Activated T-helper 1 cell treated with anti-CD3 and anti-CD28 coated beads, Interleukin-12 subunit alpha, Interleukin-12 subunit beta, Interleukin-2, Interleukin-4 antibody, amounts not matched to agents 30 ng/mL and 10 ng/mL and 1 ng/mL, durations not matched to agents 14 hours and 24 hours and 36 hours (primary cell): ENCODE measurements at regions of chr3 and their contacts with region 1.

Region 1: DNA sequence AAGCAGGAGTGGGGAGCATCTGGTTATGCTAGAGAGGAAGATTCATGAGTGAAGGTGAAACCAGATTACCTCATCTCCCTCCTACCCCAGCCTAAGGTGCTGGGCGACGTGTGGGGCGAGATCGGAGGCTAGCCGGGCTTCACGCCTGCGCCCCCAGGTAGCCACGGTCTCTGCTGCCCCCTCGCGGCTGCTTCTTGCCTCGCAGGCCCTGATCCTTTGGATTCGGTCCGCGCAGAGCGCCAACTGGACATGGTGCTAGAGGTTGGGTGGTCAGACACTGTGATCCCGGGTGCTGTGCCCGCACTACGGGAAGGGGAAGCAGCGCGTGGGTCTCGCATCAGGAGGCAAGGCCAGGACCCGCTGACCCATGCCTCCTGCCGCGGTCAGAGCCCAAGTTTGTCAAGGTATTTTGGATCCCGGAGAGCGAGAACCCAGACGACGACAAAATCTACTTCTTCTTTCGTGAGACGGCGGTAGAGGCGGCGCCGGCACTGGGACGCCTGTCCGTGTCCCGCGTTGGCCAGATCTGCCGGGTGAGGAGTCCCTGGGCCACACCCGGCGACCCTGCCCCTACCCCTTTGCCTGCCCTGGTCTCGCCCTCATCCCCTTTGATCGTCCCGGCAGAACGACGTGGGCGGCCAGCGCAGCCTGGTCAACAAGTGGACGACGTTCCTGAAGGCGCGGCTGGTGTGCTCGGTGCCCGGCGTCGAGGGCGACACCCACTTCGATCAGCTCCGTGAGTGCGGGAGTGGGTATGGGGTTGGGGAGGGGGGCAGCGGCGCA is 4.2 kb downstream of the SEMA3B start:
- DNase-seq: peak; percentile 82
- H3K4me3 Mint-ChIP-seq: peak overlapping the region; percentile 71
- H3K27ac Mint-ChIP-seq: no peak overlapping the region
- H3K4me1 Mint-ChIP-seq: peaks cover 21% of the 10 kb centered on the region
- H3K27me3 Mint-ChIP-seq: peaks cover 39% of the 10 kb centered on the region

Region 2: DNA sequence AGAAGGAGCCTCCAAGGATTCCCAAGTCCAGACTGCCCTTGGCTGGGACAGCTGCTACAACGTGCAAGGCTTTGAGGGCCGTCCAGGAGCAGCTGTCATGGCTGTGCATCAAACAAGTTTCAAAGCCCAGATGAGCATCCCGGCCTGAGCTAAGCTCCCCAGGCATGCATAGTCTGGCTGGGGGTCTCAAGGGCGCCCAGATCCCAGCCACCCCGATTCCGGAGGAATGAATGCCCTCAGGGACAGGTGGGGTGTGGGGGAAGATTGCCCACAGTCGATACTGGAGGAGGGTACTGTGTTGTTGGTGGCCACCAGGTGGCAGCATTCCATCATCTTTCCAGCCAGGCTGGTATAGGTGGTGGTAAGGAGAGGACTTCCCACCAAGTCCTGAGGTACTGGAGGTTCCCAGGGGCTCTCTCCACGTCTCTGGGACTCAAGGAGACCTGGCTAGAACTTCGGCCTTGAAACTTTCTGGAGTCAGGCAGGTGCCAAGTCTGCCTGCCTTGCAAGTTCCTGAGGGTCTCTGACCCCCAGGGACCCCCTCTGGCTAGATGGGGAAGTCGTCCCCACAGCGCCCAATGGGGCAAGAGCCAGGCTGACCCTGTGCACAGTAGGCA is 151.6 kb before region 1 on chr3:
- intact Hi-C with region 1: loop called (anchors 1 kb)
- DNase-seq: peak; percentile 36
- H3K4me3 Mint-ChIP-seq: no peak overlapping the region
- H3K27ac Mint-ChIP-seq: no peak overlapping the region
- H3K4me1 Mint-ChIP-seq: no peaks in the 10 kb centered on the region
- H3K27me3 Mint-ChIP-seq: no peaks in the 10 kb centered on the region

Region 3: GRCh38 chr3:50227390-50228183 is 45.5 kb before region 1 on chr3:
- intact Hi-C with region 1: loop called (anchors 1 kb)
- DNase-seq: peak; percentile 91
- H3K4me3 Mint-ChIP-seq: peak overlapping the region; percentile 90
- H3K27ac Mint-ChIP-seq: peak overlapping the region; percentile 90
- H3K4me1 Mint-ChIP-seq: peaks cover 34% of the 10 kb centered on the region
- H3K27me3 Mint-ChIP-seq: peaks cover 13% of the 10 kb centered on the region

Region 4: DNA sequence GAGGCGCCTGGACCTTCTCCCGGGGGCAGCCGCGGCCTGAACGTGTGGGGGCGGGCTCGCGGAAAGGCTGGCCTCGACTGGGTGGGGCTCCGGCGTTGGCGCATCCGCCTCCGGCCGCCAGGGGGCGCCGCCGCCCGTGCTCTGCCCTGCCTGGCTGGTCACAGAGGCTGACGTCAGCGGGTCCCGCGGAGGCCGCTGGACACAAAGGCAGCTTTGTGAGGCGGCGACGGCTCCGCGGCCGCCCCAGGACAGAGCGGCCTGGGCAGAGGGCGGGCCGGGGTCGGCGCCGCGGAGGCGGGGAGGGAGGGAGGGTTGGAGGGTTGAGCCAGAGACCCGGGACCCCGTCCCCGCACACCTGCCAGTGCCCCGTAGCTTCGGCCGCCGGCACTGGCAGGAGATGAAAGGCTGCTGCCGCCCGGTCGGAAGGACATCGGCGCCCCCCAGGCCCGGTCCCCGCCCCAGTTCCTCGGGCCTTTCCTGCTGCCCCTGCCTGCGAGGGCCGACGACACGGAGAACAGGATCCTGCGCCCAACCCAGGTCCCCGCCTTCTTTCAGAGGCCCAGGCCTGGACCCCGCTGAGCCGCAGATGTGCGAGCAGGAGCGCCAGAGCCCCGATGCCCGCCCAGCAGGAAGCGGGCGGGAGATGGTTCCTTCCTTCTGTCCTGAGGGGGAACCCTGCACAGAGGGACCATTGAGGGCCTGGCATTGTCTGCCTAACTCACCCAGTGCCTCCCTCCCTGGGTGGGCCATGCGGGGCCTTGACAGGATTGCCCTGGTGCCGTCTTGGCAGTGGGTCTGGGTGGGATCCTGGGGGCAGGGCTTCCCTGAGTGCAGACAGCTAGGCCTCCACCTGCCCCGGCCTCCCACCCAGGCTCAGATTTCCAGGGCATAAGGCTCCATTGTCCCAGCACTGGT is 12.8 kb before region 1 on chr3:
- intact Hi-C with region 1: loop called (anchors 1 kb)
- DNase-seq: peak; percentile 86
- H3K4me3 Mint-ChIP-seq: peak overlapping the region; percentile 68
- H3K27ac Mint-ChIP-seq: peak overlapping the region; percentile 68
- H3K4me1 Mint-ChIP-seq: no peaks in the 10 kb centered on the region
- H3K27me3 Mint-ChIP-seq: peaks cover 1% of the 10 kb centered on the region

Region 5: DNA sequence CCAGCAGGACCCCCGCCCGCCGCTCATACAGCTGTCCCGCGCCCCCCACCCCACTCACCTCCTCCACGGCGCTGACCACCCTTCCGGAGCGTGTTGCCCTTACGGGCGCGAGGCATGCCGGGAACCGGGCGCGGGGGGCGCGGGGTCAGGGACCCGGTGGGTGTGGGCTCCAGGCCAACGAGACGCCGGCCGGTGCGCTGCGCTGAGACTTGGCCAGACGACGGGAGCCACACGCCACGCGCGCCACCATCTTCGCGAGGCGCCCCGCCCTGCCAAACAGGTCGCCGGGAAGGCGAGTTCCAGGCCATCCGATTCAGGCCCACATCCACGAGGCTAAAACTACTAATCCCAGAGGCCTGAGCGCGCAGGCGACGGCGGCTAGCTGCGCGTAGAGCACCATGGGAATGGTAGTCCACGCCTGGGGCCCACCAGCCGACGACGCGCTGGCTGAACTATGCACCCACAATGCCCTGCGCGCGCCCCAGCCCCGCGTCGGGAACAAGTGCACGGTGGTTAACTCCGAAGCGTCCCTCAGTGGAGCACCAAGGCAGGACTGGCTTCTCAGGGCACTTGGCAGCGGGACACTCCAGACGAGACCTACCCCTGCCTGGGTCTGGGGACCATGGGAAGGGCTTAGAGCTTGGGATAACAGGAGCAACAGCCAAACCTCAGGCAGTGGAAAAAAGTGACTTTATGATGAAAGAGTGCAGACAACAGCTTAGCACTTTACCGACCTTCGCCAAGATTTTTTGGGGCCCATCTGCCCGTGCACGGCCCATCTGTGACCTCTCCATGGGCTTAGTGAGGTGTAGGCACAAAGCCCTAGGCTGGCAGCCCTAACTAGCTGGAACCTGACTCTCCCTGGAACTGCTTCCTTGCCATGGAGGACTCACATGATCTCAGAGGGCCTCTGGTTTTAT is 19.3 kb after region 1 on chr3 and contains the start of gene IFRD2:
- intact Hi-C with region 1: no loop called
- DNase-seq: peak; percentile 95
- H3K4me3 Mint-ChIP-seq: peak within 1 kb of the TSS; percentile 96
- H3K27ac Mint-ChIP-seq: peak within 1 kb of the TSS; percentile 83
- H3K4me1 Mint-ChIP-seq: peaks cover 14% of the 10 kb centered on the region
- H3K27me3 Mint-ChIP-seq: no peaks in the 10 kb centered on the region
- total RNA-seq, gene IFRD2: 215 TPM in 2 replicates

Region 6: GRCh38 chr3:50321336-50322114 is 48.4 kb after region 1 on chr3:
- intact Hi-C with region 1: loop called (anchors 1 kb)
- DNase-seq: peak; percentile 81
- H3K4me3 Mint-ChIP-seq: peak overlapping the region; percentile 79
- H3K27ac Mint-ChIP-seq: peak overlapping the region; percentile 83
- H3K4me1 Mint-ChIP-seq: peaks cover 35% of the 10 kb centered on the region
- H3K27me3 Mint-ChIP-seq: no peaks in the 10 kb centered on the region